ENCODE measurements at regions of chr4 and their contacts with region 1.

Region 1: DNA sequence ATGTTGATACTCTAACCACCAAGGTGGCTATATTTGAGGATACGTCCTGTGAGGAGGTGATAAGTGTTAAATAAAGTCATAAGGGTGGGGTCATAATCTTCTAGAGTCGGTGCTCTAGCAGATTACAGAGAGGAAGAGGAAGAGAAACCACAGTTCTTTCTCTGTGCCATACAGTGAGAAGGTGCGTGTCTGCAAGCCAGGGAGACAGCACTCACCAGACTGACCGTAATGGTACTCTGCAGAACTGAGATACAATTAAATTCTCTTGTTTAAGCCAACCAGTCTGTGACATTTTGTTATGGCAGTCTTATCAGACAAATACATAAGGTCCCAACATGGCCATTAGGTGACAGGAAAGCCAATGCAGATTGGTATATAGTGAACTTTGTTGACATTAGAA is 480.9 kb upstream of the IGFBP7 start:
- DNase-seq: no peak
- H3K4me3 ChIP-seq: no peak overlapping the region
- H3K27ac ChIP-seq: no peak overlapping the region
- H3K4me1 ChIP-seq: no peaks in the 10 kb centered on the region
- H3K27me3 ChIP-seq: no peaks in the 10 kb centered on the region
- CTCF ChIP-seq: no peak
- POLR2A ChIP-seq: no peak

Region 2: GRCh38 chr4:57580710-57581599 is 10.1 kb before region 1 on chr4:
- intact Hi-C with region 1: loop called (anchors 1 kb)
- DNase-seq: no peak
- H3K4me3 ChIP-seq: no peak overlapping the region
- H3K27ac ChIP-seq: no peak overlapping the region
- H3K4me1 ChIP-seq: no peaks in the 10 kb centered on the region
- H3K27me3 ChIP-seq: no peaks in the 10 kb centered on the region
- CTCF ChIP-seq: no peak
- POLR2A ChIP-seq: no peak

Region 3: DNA sequence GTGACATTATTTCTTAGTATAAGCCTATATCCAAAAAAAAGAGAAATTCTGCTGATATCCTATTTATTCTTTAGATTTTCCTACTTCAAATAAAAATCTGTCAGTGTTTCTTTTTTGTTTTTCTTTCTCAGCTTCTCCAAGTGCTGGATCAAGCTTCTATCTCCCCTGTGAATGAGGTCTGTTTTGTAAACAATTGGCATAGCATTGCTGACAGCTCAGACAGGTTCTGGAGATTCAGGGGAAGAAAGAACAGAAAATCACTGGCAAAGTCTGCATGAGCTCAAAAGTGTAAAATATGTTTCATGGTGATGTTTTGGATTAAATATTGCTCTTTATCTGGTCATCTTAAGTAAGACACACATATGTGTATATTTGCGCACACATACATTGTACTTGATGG is 11.1 kb after region 1 on chr4:
- intact Hi-C with region 1: loop called (anchors 1 kb)
- DNase-seq: no peak
- H3K4me3 ChIP-seq: no peak overlapping the region
- H3K27ac ChIP-seq: no peak overlapping the region
- H3K4me1 ChIP-seq: no peaks in the 10 kb centered on the region
- H3K27me3 ChIP-seq: no peaks in the 10 kb centered on the region
- CTCF ChIP-seq: no peak
- POLR2A ChIP-seq: no peak

Region 4: GRCh38 chr4:57612279-57612678 is 21.2 kb after region 1 on chr4:
- intact Hi-C with region 1: no loop called
- DNase-seq: no peak
- H3K4me3 ChIP-seq: no peak overlapping the region
- H3K27ac ChIP-seq: no peak overlapping the region
- H3K4me1 ChIP-seq: no peaks in the 10 kb centered on the region
- H3K27me3 ChIP-seq: no peaks in the 10 kb centered on the region
- CTCF ChIP-seq: no peak
- POLR2A ChIP-seq: no peak